ENCODE measurements at regions of chr20 and their contacts with region 1.

Region 1: GRCh38 chr20:4167261-4168021 is 152.1 kb upstream of the RNF24 start:
- DNase-seq: no peak
- ATAC-seq: no peak
- H3K4me3 Mint-ChIP-seq: no peak overlapping the region
- H3K27ac Mint-ChIP-seq: no peak overlapping the region
- H3K4me1 Mint-ChIP-seq: peaks cover 46% of the 10 kb centered on the region
- H3K27me3 Mint-ChIP-seq: no peaks in the 10 kb centered on the region

Region 2: GRCh38 chr20:4108495-4109306 is 58.7 kb before region 1 on chr20:
- CTCF ChIA-PET with region 1: interaction called, 16 read pairs
- DNase-seq: peak; percentile 85
- ATAC-seq: peak; percentile 91
- H3K4me3 Mint-ChIP-seq: no peak overlapping the region
- H3K27ac Mint-ChIP-seq: peak overlapping the region; percentile 65
- H3K4me1 Mint-ChIP-seq: peaks cover 33% of the 10 kb centered on the region
- H3K27me3 Mint-ChIP-seq: peaks cover 4% of the 10 kb centered on the region

Region 3: GRCh38 chr20:4152006-4152695 is 15.3 kb before region 1 on chr20:
- CTCF ChIA-PET with region 1: no interaction called
- DNase-seq: no peak
- ATAC-seq: no peak
- H3K4me3 Mint-ChIP-seq: no peak overlapping the region
- H3K27ac Mint-ChIP-seq: no peak overlapping the region
- H3K4me1 Mint-ChIP-seq: peaks cover 28% of the 10 kb centered on the region
- H3K27me3 Mint-ChIP-seq: peaks cover 37% of the 10 kb centered on the region

Region 4: GRCh38 chr20:4297127-4297826 is 129.8 kb after region 1 on chr20:
- CTCF ChIA-PET with region 1: no interaction called
- DNase-seq: no peak
- ATAC-seq: no peak
- H3K4me3 Mint-ChIP-seq: no peak overlapping the region
- H3K27ac Mint-ChIP-seq: no peak overlapping the region
- H3K4me1 Mint-ChIP-seq: no peaks in the 10 kb centered on the region
- H3K27me3 Mint-ChIP-seq: peaks cover 5% of the 10 kb centered on the region

Measured in activated CD8-positive, alpha-beta memory T cell treated with anti-CD3 and anti-CD28 coated beads, Interleukin-2, amount 10 ng/mL, durations not matched to agents 7 days and 5 days (primary cell).